Tibial artery (tissue), 4 donors: ENCODE measurements at regions of chr22 and their contacts with region 1.

Region 1: GRCh38 chr22:30609260-30610185 is 2.5 kb downstream of the TCN2 start:
- DNase-seq: peak in 1 of 2 donors; percentile 48
- H3K4me3 ChIP-seq: no peak overlapping the region
- H3K27ac ChIP-seq: no peak overlapping the region
- H3K4me1 ChIP-seq: peaks cover 0 to 27% (median 14%) of the 10 kb centered on the region in 4 donors
- H3K27me3 ChIP-seq: no peaks in the 10 kb centered on the region
- CTCF ChIP-seq: no peak

Region 2: DNA sequence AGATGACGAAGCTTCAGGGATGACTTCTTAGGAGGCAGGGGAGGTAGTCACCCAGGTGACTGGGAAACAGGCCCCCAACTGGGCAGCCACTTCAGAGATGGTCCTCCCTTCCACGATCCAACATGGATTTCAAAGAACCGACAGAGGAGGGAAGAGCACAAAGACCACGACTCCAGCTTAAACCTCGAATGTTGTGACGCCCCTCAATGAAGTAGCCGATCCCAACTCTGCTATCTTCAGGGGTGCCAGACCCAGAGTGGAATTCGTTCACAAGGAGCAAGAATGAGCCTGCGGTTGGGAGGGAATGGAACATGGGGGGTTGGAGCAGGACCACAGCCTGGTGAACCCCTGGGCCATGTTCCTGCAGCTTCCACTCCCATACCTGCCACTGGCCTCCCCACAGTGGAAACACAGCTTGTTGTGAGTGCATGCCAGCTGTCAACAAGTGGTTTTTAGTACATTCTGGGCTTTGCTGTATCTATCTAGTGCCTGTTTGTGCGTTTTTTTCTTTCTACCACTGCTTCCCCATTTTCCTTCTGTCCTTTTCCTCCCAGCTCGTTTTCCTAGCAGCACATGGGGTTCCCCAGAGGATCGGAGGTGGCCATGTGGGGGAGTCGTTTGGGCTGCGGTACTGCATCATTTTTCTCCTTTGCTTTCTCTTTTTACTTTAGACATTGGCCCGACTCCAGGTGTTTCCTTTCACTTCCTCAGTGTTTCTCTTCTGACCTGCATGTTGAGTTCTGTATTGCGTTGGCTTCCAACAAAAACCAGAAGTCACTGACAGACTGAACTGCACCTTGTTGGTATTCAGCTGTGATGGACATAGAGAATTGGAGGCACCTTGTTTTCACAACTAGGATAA is 293.2 kb after region 1 on chr22:
- intact Hi-C with region 1: loop called (anchors 10 kb)
- DNase-seq: peak in 1 of 2 donors; percentile 11
- H3K4me3 ChIP-seq: no peak overlapping the region
- H3K27ac ChIP-seq: no peak overlapping the region
- H3K4me1 ChIP-seq: no peaks in the 10 kb centered on the region
- H3K27me3 ChIP-seq: no peaks in the 10 kb centered on the region
- CTCF ChIP-seq: no peak